CD8-positive, alpha-beta T cell (primary cell): ENCODE measurements at regions of chr3 and their contacts with region 1.

Region 1: DNA sequence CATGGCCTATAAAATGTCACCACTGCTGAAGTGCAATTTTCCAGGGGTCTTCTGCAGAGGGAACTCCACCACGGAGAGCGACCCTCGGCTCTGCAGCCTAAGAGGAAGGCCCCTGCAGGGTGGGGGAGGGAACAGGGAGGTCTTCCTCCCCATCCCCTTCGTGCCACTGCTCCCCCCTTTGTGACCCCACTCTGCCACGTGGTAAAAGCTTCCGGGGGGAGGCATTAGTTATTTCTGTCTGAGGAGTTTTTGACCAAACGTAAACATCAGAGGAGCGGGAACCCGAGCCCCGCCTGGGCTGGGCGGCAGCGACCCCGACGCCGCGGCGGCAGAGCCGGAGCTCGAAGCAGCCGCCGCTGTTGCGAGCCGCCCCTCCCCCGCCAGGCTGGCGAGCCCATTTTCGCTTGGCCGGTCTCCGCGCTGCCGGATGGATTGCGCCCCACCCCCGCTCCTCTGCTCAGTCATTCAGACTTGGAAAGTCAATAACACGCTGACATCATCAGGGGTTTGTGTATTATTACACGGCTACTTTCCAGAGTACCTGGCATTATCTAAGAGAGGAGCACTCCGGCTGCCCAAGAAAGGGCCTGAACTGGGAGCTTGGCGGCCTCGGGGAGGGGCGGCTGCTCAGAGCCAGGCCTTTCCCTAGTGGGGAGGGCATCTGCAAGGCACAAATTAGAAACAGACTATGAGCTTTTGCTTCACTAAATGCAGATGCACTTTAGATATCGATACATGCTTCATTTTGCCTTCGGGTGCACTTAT is 162.5 kb upstream of the TBL1XR1 start:
- DNase-seq: peak; percentile 94 to 99 (median 96)
- ATAC-seq: peak; percentile 84
- H3K4me3 ChIP-seq: peak overlapping the region; percentile 59 to 93
- H3K4me3 Mint-ChIP-seq: peak overlapping the region; percentile 92
- H3K27ac ChIP-seq: peak overlapping the region; percentile 89 to 99
- H3K27ac Mint-ChIP-seq: peak overlapping the region; percentile 99
- H3K4me1 ChIP-seq: peaks cover 33% of the 10 kb centered on the region
- H3K4me1 Mint-ChIP-seq: peaks cover 49% of the 10 kb centered on the region
- H3K27me3 ChIP-seq: no peaks in the 10 kb centered on the region
- H3K27me3 Mint-ChIP-seq: no peaks in the 10 kb centered on the region
- CTCF ChIP-seq: no peak

Region 2: GRCh38 chr3:177050501-177051237 is 309.1 kb before region 1 on chr3:
- CTCF ChIA-PET with region 1: interaction called, 16 read pairs
- POLR2A ChIA-PET with region 1: interaction called, 18 read pairs
- intact Hi-C with region 1: loop called (anchors 1 to 2 kb)
- DNase-seq: peak in 2 of 9 experiments; percentile 64 to 75
- ATAC-seq: peak; percentile 86
- H3K4me3 ChIP-seq: no peak overlapping the region
- H3K4me3 Mint-ChIP-seq: no peak overlapping the region
- H3K27ac ChIP-seq: no peak overlapping the region
- H3K27ac Mint-ChIP-seq: no peak overlapping the region
- H3K4me1 ChIP-seq: peaks cover 3% of the 10 kb centered on the region
- H3K4me1 Mint-ChIP-seq: peaks cover 20% of the 10 kb centered on the region
- H3K27me3 ChIP-seq: no peaks in the 10 kb centered on the region
- H3K27me3 Mint-ChIP-seq: no peaks in the 10 kb centered on the region
- CTCF ChIP-seq: peak; percentile 95

Region 3: GRCh38 chr3:177300039-177300833 is 59.5 kb before region 1 on chr3:
- CTCF ChIA-PET with region 1: no interaction called
- POLR2A ChIA-PET with region 1: no interaction called
- intact Hi-C with region 1: loop called (anchors 2 to 10 kb)
- DNase-seq: no peak
- ATAC-seq: no peak
- H3K4me3 ChIP-seq: no peak overlapping the region
- H3K4me3 Mint-ChIP-seq: no peak overlapping the region
- H3K27ac ChIP-seq: no peak overlapping the region
- H3K27ac Mint-ChIP-seq: no peak overlapping the region
- H3K4me1 ChIP-seq: no peaks in the 10 kb centered on the region
- H3K4me1 Mint-ChIP-seq: no peaks in the 10 kb centered on the region
- H3K27me3 ChIP-seq: no peaks in the 10 kb centered on the region
- H3K27me3 Mint-ChIP-seq: no peaks in the 10 kb centered on the region
- CTCF ChIP-seq: no peak

Region 4: GRCh38 chr3:177396716-177397115 is 36.9 kb after region 1 on chr3:
- CTCF ChIA-PET with region 1: no interaction called
- POLR2A ChIA-PET with region 1: no interaction called
- intact Hi-C with region 1: loop called (anchors 5 kb)
- DNase-seq: no peak
- ATAC-seq: no peak
- H3K4me3 ChIP-seq: no peak overlapping the region
- H3K4me3 Mint-ChIP-seq: no peak overlapping the region
- H3K27ac ChIP-seq: no peak overlapping the region
- H3K27ac Mint-ChIP-seq: no peak overlapping the region
- H3K4me1 ChIP-seq: no peaks in the 10 kb centered on the region
- H3K4me1 Mint-ChIP-seq: no peaks in the 10 kb centered on the region
- H3K27me3 ChIP-seq: no peaks in the 10 kb centered on the region
- H3K27me3 Mint-ChIP-seq: no peaks in the 10 kb centered on the region
- CTCF ChIP-seq: no peak

Region 5: GRCh38 chr3:177554895-177555759 is 195.4 kb after region 1 on chr3:
- CTCF ChIA-PET with region 1: no interaction called
- POLR2A ChIA-PET with region 1: no interaction called
- intact Hi-C with region 1: loop called in 1 of 2 experiments (anchors 5 kb)
- DNase-seq: peak in 2 of 9 experiments; percentile 8 to 23
- ATAC-seq: no peak
- H3K4me3 ChIP-seq: no peak overlapping the region
- H3K4me3 Mint-ChIP-seq: no peak overlapping the region
- H3K27ac ChIP-seq: peak overlapping the region in 1 of 2 experiments; percentile 32
- H3K27ac Mint-ChIP-seq: peak overlapping the region; percentile 62
- H3K4me1 ChIP-seq: peaks cover 26% of the 10 kb centered on the region
- H3K4me1 Mint-ChIP-seq: peaks cover 65% of the 10 kb centered on the region
- H3K27me3 ChIP-seq: no peaks in the 10 kb centered on the region
- H3K27me3 Mint-ChIP-seq: no peaks in the 10 kb centered on the region
- CTCF ChIP-seq: no peak

Region 6: GRCh38 chr3:177646749-177647148 is 287.0 kb after region 1 on chr3:
- CTCF ChIA-PET with region 1: interaction called, 3 read pairs
- POLR2A ChIA-PET with region 1: interaction called, 15 read pairs
- intact Hi-C with region 1: loop called in 1 of 2 experiments (anchors 10 kb)
- DNase-seq: peak in 6 of 9 experiments; percentile 15 to 66 (median 47)
- ATAC-seq: peak; percentile 48
- H3K4me3 ChIP-seq: no peak overlapping the region
- H3K4me3 Mint-ChIP-seq: peak overlapping the region; percentile 42
- H3K27ac ChIP-seq: peak overlapping the region in 1 of 2 experiments; percentile 59
- H3K27ac Mint-ChIP-seq: peak overlapping the region; percentile 49
- H3K4me1 ChIP-seq: peaks cover 49% of the 10 kb centered on the region
- H3K4me1 Mint-ChIP-seq: peaks cover 68% of the 10 kb centered on the region
- H3K27me3 ChIP-seq: no peaks in the 10 kb centered on the region
- H3K27me3 Mint-ChIP-seq: no peaks in the 10 kb centered on the region
- CTCF ChIP-seq: no peak

Region 7: DNA sequence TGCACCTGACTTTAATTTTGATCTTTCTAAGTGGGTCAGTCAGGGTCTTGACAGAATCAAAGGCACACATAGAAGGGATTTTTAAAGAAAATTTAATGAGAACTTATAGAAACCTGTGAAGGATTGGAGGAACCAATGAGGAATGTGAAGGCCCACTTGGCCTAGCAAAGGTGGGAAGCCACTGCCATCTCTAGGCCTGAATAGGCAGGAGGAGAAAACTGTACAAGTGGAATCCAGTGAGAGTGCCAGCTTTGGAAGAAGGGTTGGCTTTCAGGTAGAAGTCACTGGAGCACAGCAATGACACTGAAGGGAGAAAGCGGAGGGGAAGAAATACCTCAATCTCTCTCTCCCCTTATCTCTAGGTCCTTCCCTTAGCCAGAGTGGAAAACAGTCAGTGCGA is 795.7 kb after region 1 on chr3:
- CTCF ChIA-PET with region 1: no interaction called
- POLR2A ChIA-PET with region 1: no interaction called
- intact Hi-C with region 1: loop called in 1 of 2 experiments (anchors 5 kb)
- DNase-seq: peak in 3 of 9 experiments; percentile 2 to 18 (median 7)
- ATAC-seq: no peak
- H3K4me3 ChIP-seq: no peak overlapping the region
- H3K4me3 Mint-ChIP-seq: no peak overlapping the region
- H3K27ac ChIP-seq: no peak overlapping the region
- H3K27ac Mint-ChIP-seq: no peak overlapping the region
- H3K4me1 ChIP-seq: no peaks in the 10 kb centered on the region
- H3K4me1 Mint-ChIP-seq: no peaks in the 10 kb centered on the region
- H3K27me3 ChIP-seq: no peaks in the 10 kb centered on the region
- H3K27me3 Mint-ChIP-seq: no peaks in the 10 kb centered on the region
- CTCF ChIP-seq: no peak